ENCODE measurements at regions of chr20 and their contacts with region 1.

Region 1: GRCh38 chr20:38057351-38057972 is 23.9 kb downstream of the RPRD1B start:
- DNase-seq: peak; percentile 73
- ATAC-seq: peak; percentile 97
- H3K4me3 Mint-ChIP-seq: no peak overlapping the region
- H3K27ac Mint-ChIP-seq: peak overlapping the region; percentile 80
- H3K4me1 Mint-ChIP-seq: peaks cover 14% of the 10 kb centered on the region
- H3K27me3 Mint-ChIP-seq: no peaks in the 10 kb centered on the region
- CTCF ChIP-seq: peak; percentile 98

Region 2: DNA sequence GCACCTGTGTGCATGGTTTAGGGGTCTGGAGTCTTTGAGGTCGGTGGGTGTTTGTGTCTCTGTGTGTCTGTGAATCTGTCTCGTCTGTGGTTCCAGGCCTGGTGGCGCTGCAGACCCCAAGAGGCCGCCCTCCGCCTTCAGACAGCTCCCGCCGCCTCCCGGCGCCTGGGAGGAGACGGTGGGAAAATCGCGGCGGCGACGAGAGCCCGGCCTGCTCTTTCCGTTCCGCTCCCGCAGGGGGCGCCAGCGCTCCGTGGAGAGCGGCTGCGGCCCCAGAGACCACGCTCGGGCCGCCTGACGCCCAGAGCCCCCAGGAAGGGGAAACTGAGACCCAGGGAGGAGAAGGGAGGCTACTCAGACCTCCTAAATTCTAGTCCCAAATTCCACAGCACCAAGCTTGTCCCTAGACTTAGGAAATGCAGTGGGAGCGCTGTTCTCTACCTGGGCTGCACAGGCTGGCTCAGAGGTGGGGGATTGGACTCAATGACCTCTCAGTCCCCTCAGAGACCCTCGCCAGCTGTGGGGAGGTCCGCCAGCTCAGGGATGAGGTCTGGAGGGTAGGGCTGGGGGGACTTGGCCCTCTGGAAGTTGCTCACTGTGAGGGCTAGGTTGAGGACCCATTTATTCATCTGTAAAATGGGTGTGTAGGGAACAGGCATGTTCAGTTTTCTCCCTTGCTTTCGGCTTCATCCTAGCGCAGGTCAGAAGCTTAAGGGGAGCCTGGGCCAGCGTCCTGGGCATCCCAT is 492.9 kb before region 1 on chr20:
- CTCF ChIA-PET with region 1: interaction called, 4 read pairs
- POLR2A ChIA-PET with region 1: no interaction called
- intact Hi-C with region 1: loop called (anchors 5 kb)
- DNase-seq: peak; percentile 58
- ATAC-seq: peak; percentile 77
- H3K4me3 Mint-ChIP-seq: no peak overlapping the region
- H3K27ac Mint-ChIP-seq: no peak overlapping the region
- H3K4me1 Mint-ChIP-seq: peaks cover 5% of the 10 kb centered on the region
- H3K27me3 Mint-ChIP-seq: peaks cover 32% of the 10 kb centered on the region
- CTCF ChIP-seq: peak; percentile 43

Region 3: GRCh38 chr20:37968841-37969401 is 88.5 kb before region 1 on chr20:
- CTCF ChIA-PET with region 1: no interaction called
- POLR2A ChIA-PET with region 1: no interaction called
- intact Hi-C with region 1: no loop called
- DNase-seq: no peak
- ATAC-seq: no peak
- H3K4me3 Mint-ChIP-seq: no peak overlapping the region
- H3K27ac Mint-ChIP-seq: no peak overlapping the region
- H3K4me1 Mint-ChIP-seq: no peaks in the 10 kb centered on the region
- H3K27me3 Mint-ChIP-seq: peaks cover 26% of the 10 kb centered on the region
- CTCF ChIP-seq: no peak

Region 4: DNA sequence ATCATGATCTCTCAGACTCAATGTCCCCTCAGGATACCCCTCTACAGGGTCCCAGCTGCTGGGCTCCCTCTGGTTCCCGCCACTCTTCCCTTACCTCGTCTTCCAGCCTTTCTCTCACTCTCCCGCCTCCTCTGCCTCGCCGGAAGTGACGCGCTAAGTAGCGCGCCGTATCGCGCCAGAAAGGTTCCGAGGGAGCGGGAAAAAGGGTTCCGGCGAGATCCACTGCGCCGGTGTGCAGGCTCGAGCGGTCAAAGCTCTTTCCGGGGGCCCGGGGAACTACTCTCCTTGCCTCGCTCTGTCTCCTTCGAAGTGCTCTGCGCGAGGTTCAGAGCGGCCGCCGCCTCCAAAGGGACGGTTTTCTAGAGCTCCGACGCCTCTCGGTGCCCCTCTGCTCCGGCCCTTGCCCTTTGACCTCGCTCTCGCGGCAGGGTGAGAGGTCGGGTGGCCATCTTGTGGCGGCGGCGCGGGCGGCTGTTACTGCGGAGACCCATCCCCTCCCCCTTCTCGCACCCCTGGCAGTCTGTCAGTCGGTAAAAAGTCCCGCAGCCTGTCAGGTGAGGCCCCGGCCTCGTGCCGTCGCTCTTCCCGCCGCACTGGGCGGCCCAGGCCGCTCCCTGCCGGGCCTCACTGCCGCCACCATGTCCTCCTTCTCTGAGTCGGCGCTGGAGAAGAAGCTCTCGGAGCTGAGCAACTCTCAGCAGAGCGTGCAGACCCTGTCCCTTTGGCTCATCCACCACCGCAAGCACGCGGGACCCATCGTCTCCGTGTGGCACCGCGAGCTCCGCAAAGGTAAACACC is 24.0 kb before region 1 on chr20 and contains the starts of genes RPRD1B and TTI1:
- CTCF ChIA-PET with region 1: interaction called, 6 read pairs
- POLR2A ChIA-PET with region 1: interaction called, 4 read pairs
- intact Hi-C with region 1: loop called (anchors 1 kb)
- DNase-seq: peak; percentile 89
- ATAC-seq: peak; percentile 87
- H3K4me3 Mint-ChIP-seq: peak within 1 kb of the TSS; percentile 92
- H3K27ac Mint-ChIP-seq: peak within 1 kb of the TSS; percentile 96
- H3K4me1 Mint-ChIP-seq: peaks cover 67% of the 10 kb centered on the region
- H3K27me3 Mint-ChIP-seq: no peaks in the 10 kb centered on the region
- CTCF ChIP-seq: no peak
- total RNA-seq, gene RPRD1B: 38.4 and 40.8 TPM in 2 replicates
- total RNA-seq, gene TTI1: 27.1 and 30.1 TPM in 2 replicates

Region 5: GRCh38 chr20:38094373-38094891 is 37.0 kb after region 1 on chr20:
- CTCF ChIA-PET with region 1: interaction called, 9 read pairs
- POLR2A ChIA-PET with region 1: interaction called, 5 read pairs
- intact Hi-C with region 1: loop called (anchors 5 kb)
- DNase-seq: no peak
- ATAC-seq: peak; percentile 70
- H3K4me3 Mint-ChIP-seq: peak overlapping the region; percentile 71
- H3K27ac Mint-ChIP-seq: peak overlapping the region; percentile 96
- H3K4me1 Mint-ChIP-seq: peaks cover 87% of the 10 kb centered on the region
- H3K27me3 Mint-ChIP-seq: no peaks in the 10 kb centered on the region
- CTCF ChIP-seq: no peak

Region 6: DNA sequence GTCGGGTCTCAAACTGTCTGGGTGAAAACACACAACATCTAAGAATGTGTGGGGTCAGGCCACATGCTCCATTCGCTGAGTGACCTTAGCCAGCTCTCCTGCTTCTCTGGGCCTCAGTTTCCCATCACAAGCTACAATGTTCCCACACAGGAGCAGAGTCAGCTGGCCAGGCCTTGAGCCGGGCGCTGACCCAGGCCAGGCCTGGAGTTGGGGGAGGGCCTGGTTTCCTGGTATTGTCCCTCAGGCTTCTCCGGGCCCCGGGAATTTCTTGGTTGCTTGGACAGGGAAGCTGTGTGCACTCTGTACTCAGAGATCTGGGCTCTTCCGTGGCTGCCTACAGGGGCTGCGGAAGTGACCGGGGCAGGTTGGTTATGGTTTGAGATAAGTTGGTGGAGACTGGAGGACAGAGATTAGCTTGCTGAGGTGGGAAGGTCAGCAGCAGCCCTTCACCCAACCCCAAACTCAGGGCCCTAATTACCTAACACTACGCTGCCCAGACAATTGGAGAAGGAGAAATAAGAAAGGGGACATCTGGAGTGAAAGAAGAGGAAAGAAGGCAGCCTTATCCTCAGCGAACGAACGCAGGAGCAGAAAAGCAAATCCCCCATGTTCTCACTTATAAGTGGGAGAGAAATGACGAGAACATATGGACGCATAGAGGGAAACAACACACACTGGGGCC is 101.3 kb after region 1 on chr20:
- CTCF ChIA-PET with region 1: interaction called, 26 read pairs
- POLR2A ChIA-PET with region 1: no interaction called
- intact Hi-C with region 1: no loop called
- DNase-seq: no peak
- ATAC-seq: no peak
- H3K4me3 Mint-ChIP-seq: no peak overlapping the region
- H3K27ac Mint-ChIP-seq: no peak overlapping the region
- H3K4me1 Mint-ChIP-seq: peaks cover 8% of the 10 kb centered on the region
- H3K27me3 Mint-ChIP-seq: no peaks in the 10 kb centered on the region
- CTCF ChIP-seq: no peak

Region 7: DNA sequence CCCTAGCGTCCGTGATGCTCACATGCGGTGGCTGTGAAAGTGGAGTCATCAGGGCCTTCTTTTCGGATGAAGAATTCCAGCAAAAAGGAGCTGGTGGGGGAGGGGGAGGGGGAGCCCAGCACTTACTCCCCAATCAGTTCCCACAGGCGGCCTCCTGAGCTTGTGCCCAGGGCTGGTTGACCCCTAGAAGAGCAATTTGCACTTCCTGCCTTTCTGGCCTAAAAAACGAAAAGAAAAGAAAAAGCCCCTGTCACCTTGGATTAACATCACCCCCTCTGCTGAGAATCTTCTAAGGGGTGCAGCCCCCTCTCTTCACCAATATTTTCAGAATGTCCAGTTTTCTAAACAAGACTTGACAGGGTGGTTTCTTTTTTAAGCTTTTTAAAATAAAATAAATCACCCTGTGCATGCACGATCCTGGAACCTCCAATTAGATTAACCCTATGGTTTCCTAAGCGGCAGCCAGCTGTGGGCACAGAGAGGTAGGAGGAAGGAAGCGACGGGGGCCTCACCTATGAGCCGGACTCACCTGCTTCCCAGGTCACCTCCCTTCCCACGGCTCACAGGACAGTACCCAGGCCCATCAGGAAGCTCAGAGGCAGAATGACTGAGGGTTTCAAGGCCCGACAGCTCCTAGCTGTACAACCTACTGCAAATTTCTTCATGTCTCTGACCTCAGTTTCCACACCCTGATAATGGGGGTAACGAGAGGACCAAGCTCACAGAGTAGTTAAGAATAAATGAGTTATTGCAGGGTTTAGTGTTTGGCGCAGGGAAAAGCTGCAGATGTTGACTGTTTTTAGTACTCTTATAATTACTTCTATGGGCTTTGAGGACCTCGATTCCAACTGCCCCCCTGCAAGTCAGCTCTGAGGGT is 118.1 kb after region 1 on chr20:
- CTCF ChIA-PET with region 1: interaction called, 3 read pairs
- POLR2A ChIA-PET with region 1: interaction called, 12 read pairs
- intact Hi-C with region 1: no loop called
- DNase-seq: no peak
- ATAC-seq: no peak
- H3K4me3 Mint-ChIP-seq: no peak overlapping the region
- H3K27ac Mint-ChIP-seq: no peak overlapping the region
- H3K4me1 Mint-ChIP-seq: no peaks in the 10 kb centered on the region
- H3K27me3 Mint-ChIP-seq: peaks cover 16% of the 10 kb centered on the region
- CTCF ChIP-seq: no peak

Region 8: DNA sequence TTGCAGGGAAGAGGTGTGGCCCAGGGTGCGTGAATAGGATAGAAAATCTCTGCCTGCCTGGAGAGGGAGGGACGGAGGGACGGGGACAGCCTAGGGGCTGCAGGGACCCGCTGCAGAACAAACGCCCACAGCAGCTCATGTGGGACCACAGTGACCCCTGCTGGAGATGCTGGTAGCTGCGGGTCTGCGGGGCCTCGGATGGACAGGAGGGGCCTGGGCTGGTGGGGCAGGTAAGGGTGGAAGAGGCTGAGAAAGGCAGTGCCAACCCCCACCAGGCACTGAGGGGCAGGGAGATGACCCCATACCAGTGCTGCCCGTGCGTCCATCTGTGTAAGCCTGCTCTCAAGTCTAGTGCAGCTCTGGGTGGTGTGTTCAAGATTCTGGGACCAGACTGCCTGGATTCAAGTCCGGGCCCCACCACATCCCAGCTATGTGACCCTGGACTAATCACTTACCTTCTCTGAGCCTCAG is 163.7 kb after region 1 on chr20:
- CTCF ChIA-PET with region 1: interaction called, 307 read pairs
- POLR2A ChIA-PET with region 1: interaction called, 3 read pairs
- intact Hi-C with region 1: loop called (anchors 1 kb)
- DNase-seq: peak; percentile 72
- ATAC-seq: peak; percentile 93
- H3K4me3 Mint-ChIP-seq: no peak overlapping the region
- H3K27ac Mint-ChIP-seq: no peak overlapping the region
- H3K4me1 Mint-ChIP-seq: peaks cover 3% of the 10 kb centered on the region
- H3K27me3 Mint-ChIP-seq: peaks cover 4% of the 10 kb centered on the region
- CTCF ChIP-seq: peak; percentile 37